Right ventricle myocardium inferior (tissue), 1 donor: ENCODE measurements at regions of chr2 and their contacts with region 1.

Region 1: GRCh38 chr2:95165129-95166064 is at the start of gene ZNF2:
- DNase-seq: peak; percentile 98
- ATAC-seq: peak; percentile 98
- total RNA-seq, gene ZNF2: 4.3 TPM

Region 2: GRCh38 chr2:95121407-95122196 is 43.8 kb before region 1 on chr2 and contains the start of gene MRPS5:
- intact Hi-C with region 1: loop called (anchors 5 kb)
- DNase-seq: peak; percentile 93
- ATAC-seq: peak; percentile 99
- total RNA-seq, gene MRPS5: 77.2 TPM

Region 3: DNA sequence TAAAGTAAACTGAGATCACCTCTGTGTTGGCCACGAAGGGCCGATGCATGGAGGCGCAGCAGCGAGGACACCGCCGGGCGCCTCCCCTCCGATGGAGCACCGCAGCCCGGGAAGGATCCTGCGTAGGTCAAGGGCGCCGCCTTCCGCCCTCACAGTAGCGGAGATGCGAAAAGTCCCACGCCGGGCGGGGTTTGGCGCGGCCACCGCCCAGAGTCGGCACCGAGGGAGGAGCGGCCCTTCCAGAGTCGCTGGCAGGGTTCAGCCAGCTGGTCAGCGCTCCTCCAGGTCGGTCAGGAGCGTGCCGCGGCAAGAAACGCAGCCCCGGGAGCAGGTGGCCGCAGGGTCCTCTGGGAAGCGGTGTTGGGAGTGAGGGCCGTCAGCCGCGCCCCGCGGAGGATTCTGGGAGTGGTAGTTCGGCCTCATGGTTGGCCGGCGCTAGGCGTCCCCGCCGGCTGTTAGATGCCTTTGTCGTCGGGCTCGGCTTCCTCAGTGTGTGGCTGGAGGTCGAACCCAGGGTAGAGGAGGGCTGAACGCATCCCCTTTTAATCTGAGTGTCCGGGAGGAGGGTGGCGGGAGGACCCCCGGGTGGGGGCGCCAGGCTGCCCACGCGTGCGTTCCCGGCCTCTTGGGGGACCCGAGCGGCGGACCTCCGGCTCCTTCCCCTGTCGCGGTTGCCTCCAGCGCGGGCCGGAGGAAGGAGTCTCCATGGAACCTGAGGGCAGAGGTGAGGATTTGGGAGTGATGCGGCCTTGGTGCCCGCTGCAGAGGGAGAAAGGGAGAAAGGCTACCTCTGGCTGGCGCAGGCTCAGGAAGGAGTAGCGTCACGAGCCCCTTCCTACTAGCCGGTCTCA is 41.9 kb after region 1 on chr2 and contains the start of gene ZNF892:
- intact Hi-C with region 1: loop called (anchors 2 kb)
- DNase-seq: peak; percentile 96
- ATAC-seq: peak; percentile 99
- total RNA-seq, gene ZNF892: 2.5 TPM

Region 4: GRCh38 chr2:95240091-95240490 is 74.7 kb after region 1 on chr2:
- intact Hi-C with region 1: no loop called
- DNase-seq: no peak
- ATAC-seq: no peak

Region 5: GRCh38 chr2:95402370-95403203 is 237.2 kb after region 1 on chr2 and contains the start of gene FAHD2A:
- intact Hi-C with region 1: loop called (anchors 5 kb)
- DNase-seq: peak; percentile 99
- ATAC-seq: peak; percentile 98
- total RNA-seq, gene FAHD2A: 41.6 TPM